ENCODE measurements at regions of chr17 and their contacts with region 1.

Region 1: GRCh38 chr17:20992987-20993862 is 49.6 kb downstream of the USP22 start:
- DNase-seq: peak; percentile 50
- ATAC-seq: peak; percentile 94
- H3K4me3 Mint-ChIP-seq: no peak overlapping the region
- H3K27ac Mint-ChIP-seq: no peak overlapping the region
- H3K4me1 Mint-ChIP-seq: peaks cover 2% of the 10 kb centered on the region
- H3K27me3 Mint-ChIP-seq: no peaks in the 10 kb centered on the region
- CTCF ChIP-seq: no peak

Region 2: DNA sequence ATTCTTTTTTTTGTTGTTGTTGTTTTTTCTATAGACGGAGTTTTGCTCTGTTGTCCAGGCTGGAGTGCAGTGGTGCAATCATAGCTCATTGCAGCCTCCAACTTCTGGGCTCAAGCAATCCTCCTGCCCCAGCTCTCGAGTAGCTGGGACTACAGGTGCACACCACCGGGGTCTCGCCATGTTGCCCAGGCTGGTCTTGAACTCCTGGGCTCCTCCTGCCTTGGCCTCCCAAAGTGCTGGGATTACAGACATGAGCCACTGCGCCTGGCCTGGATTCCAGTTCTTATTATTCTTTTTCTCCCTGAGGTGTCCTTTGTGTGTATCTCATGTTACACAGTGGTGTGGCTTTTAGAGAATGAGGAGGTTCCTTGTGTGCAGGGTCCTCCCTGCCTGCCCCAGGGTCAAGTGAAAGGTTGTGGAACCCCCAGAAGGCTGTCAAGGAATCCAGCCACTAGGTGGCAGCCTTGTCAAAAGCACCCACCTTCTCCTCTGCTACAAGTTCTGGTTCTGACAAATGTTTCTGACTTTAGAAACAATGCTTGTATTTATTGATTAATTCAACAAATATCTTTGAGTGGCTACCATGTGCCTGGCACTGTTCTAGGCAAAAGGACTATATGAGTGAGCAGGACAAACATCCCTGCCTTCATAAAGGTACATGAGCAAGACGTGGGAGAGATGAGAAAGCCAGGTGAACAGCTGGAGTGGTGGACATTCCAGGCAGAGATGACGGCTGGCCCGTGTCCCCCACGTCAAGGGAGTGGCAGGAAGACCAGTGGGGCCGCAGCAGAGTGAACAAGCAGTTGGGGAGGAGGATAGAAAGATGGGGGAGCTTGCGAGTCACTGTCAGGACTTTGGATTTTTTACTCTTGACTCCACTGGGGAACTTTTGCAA is 871.6 kb before region 1 on chr17:
- CTCF ChIA-PET with region 1: no interaction called
- POLR2A ChIA-PET with region 1: no interaction called
- intact Hi-C with region 1: loop called (anchors 2 kb)
- DNase-seq: peak; percentile 52
- ATAC-seq: peak; percentile 71
- H3K4me3 Mint-ChIP-seq: no peak overlapping the region
- H3K27ac Mint-ChIP-seq: no peak overlapping the region
- H3K4me1 Mint-ChIP-seq: no peaks in the 10 kb centered on the region
- H3K27me3 Mint-ChIP-seq: peaks cover 1% of the 10 kb centered on the region
- CTCF ChIP-seq: peak; percentile 80

Region 3: GRCh38 chr17:20896153-20896649 is 97.0 kb before region 1 on chr17:
- CTCF ChIA-PET with region 1: no interaction called
- POLR2A ChIA-PET with region 1: no interaction called
- intact Hi-C with region 1: loop called (anchors 1 kb)
- DNase-seq: peak; percentile 17
- ATAC-seq: peak; percentile 58
- H3K4me3 Mint-ChIP-seq: no peak overlapping the region
- H3K27ac Mint-ChIP-seq: no peak overlapping the region
- H3K4me1 Mint-ChIP-seq: no peaks in the 10 kb centered on the region
- H3K27me3 Mint-ChIP-seq: peaks cover 13% of the 10 kb centered on the region
- CTCF ChIP-seq: no peak

Region 4: GRCh38 chr17:20908373-20909273 is 84.6 kb before region 1 on chr17:
- CTCF ChIA-PET with region 1: no interaction called
- POLR2A ChIA-PET with region 1: no interaction called
- intact Hi-C with region 1: loop called (anchors 1 kb)
- DNase-seq: peak; percentile 74
- ATAC-seq: peak; percentile 99
- H3K4me3 Mint-ChIP-seq: peak overlapping the region; percentile 82
- H3K27ac Mint-ChIP-seq: no peak overlapping the region
- H3K4me1 Mint-ChIP-seq: peaks cover 7% of the 10 kb centered on the region
- H3K27me3 Mint-ChIP-seq: no peaks in the 10 kb centered on the region
- CTCF ChIP-seq: no peak

Region 5: DNA sequence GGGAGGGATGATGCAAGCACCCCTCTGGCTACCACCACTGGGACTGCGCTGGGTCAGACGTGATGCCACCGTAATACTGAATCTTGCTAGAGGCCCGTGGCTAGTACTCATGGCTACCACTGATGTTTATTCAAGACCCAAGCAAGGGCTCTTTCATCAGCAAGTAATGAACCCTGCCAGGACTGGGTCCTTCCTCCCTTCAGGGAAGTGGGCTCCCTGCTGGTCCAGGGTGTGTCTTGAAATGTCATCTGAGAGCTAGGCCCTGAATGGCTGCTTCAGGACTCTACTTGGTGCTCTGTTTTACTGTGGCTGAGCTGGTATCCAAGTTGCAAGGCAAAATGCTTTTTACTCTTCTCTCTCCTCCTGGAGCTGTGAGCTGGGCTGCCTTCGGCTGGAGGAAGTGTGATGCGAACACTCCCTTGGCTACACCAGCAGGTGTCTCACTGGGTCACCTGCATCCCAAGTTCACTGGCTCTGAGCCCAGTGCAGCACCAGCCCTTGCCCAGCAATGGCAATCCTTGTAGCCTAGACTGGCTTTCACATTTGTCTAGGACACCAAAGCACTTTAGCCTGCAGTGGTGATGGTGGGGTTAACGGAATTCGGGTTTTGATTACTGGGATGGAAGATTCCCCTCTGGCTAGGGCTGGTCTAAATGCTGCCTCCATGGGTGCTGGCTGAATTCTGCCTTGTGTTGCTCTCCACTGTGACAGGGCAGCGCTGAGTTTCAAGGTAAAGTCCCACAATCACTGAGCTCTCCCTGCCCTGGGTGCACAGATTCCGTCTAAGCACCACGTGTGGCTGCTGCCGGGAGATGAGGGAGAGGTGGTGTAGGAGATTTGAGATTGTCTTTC is 49.0 kb before region 1 on chr17:
- CTCF ChIA-PET with region 1: interaction called, 32 read pairs
- POLR2A ChIA-PET with region 1: no interaction called
- intact Hi-C with region 1: loop called (anchors 1 kb)
- DNase-seq: no peak
- ATAC-seq: peak; percentile 93
- H3K4me3 Mint-ChIP-seq: no peak overlapping the region
- H3K27ac Mint-ChIP-seq: no peak overlapping the region
- H3K4me1 Mint-ChIP-seq: no peaks in the 10 kb centered on the region
- H3K27me3 Mint-ChIP-seq: peaks cover 8% of the 10 kb centered on the region
- CTCF ChIP-seq: no peak

Region 6: DNA sequence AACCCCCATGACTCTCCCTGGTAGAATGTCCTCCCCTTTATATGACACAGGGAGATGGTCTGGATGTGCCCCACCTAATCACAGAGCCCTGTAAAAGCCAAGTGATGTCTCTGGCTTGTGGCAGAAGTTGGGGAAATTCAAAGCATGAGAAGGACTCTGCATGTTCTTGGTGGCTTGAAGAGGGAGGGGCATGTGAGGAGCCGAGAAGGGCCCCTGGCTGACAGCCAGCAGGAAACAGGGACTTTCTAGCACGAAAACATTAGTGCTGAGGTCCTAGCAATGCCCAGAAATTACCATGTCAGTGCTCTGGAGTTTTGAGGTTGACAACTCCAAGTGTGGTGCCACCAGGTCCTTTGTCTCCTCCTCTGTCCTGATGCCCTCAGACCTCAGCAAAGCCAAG is 26.4 kb before region 1 on chr17:
- CTCF ChIA-PET with region 1: interaction called, 4 read pairs
- POLR2A ChIA-PET with region 1: no interaction called
- intact Hi-C with region 1: loop called (anchors 1 kb)
- DNase-seq: no peak
- ATAC-seq: peak; percentile 43
- H3K4me3 Mint-ChIP-seq: no peak overlapping the region
- H3K27ac Mint-ChIP-seq: peak overlapping the region; percentile 19
- H3K4me1 Mint-ChIP-seq: peaks cover 58% of the 10 kb centered on the region
- H3K27me3 Mint-ChIP-seq: peaks cover 5% of the 10 kb centered on the region
- CTCF ChIP-seq: no peak

Region 7: GRCh38 chr17:21010705-21011606 is 17.7 kb after region 1 on chr17:
- CTCF ChIA-PET with region 1: no interaction called
- POLR2A ChIA-PET with region 1: no interaction called
- intact Hi-C with region 1: no loop called
- DNase-seq: no peak
- ATAC-seq: no peak
- H3K4me3 Mint-ChIP-seq: no peak overlapping the region
- H3K27ac Mint-ChIP-seq: no peak overlapping the region
- H3K4me1 Mint-ChIP-seq: peaks cover 9% of the 10 kb centered on the region
- H3K27me3 Mint-ChIP-seq: no peaks in the 10 kb centered on the region
- CTCF ChIP-seq: no peak

Region 8: GRCh38 chr17:21194703-21195102 is 201.5 kb after region 1 on chr17:
- CTCF ChIA-PET with region 1: no interaction called
- POLR2A ChIA-PET with region 1: no interaction called
- intact Hi-C with region 1: no loop called
- DNase-seq: no peak
- ATAC-seq: no peak
- H3K4me3 Mint-ChIP-seq: no peak overlapping the region
- H3K27ac Mint-ChIP-seq: no peak overlapping the region
- H3K4me1 Mint-ChIP-seq: peaks cover 6% of the 10 kb centered on the region
- H3K27me3 Mint-ChIP-seq: no peaks in the 10 kb centered on the region
- CTCF ChIP-seq: no peak

Region 9: GRCh38 chr17:21511363-21512198 is 518.4 kb after region 1 on chr17:
- CTCF ChIA-PET with region 1: no interaction called
- POLR2A ChIA-PET with region 1: no interaction called
- intact Hi-C with region 1: loop called (anchors 1 kb)
- DNase-seq: peak; percentile 63
- ATAC-seq: peak; percentile 80
- H3K4me3 Mint-ChIP-seq: peak overlapping the region; percentile 80
- H3K27ac Mint-ChIP-seq: no peak overlapping the region
- H3K4me1 Mint-ChIP-seq: peaks cover 26% of the 10 kb centered on the region
- H3K27me3 Mint-ChIP-seq: peaks cover 17% of the 10 kb centered on the region
- CTCF ChIP-seq: no peak

Measured in activated B cell treated with CpG ODN at 0.5 μM for 24 hours (primary cell).